PC-9 (cell line): ENCODE measurements at regions of chr1 and their contacts with region 1.

Region 1: GRCh38 chr1:114979278-114979891 is 50.2 kb upstream of the TSHB start:
- DNase-seq: peak; percentile 57 to 59
- H3K4me3 ChIP-seq: no peak overlapping the region
- H3K27ac ChIP-seq: no peak overlapping the region
- H3K4me1 ChIP-seq: no peaks in the 10 kb centered on the region
- H3K27me3 ChIP-seq: no peaks in the 10 kb centered on the region
- CTCF ChIP-seq: peak; percentile 96

Region 2: GRCh38 chr1:115052454-115053083 is 73.2 kb after region 1 on chr1:
- CTCF ChIA-PET with region 1: interaction called, 3 read pairs
- POLR2A ChIA-PET with region 1: no interaction called
- intact Hi-C with region 1: loop called (anchors 2 kb)
- DNase-seq: peak; percentile 48 to 56
- H3K4me3 ChIP-seq: no peak overlapping the region
- H3K27ac ChIP-seq: no peak overlapping the region
- H3K4me1 ChIP-seq: no peaks in the 10 kb centered on the region
- H3K27me3 ChIP-seq: no peaks in the 10 kb centered on the region
- CTCF ChIP-seq: peak; percentile 99

Region 3: GRCh38 chr1:115112496-115113375 is 133.4 kb after region 1 on chr1:
- CTCF ChIA-PET with region 1: interaction called, 3 read pairs
- POLR2A ChIA-PET with region 1: no interaction called
- intact Hi-C with region 1: loop called (anchors 1 kb)
- DNase-seq: peak in 1 of 2 experiments; percentile 56
- H3K4me3 ChIP-seq: no peak overlapping the region
- H3K27ac ChIP-seq: no peak overlapping the region
- H3K4me1 ChIP-seq: peaks cover 63% of the 10 kb centered on the region
- H3K27me3 ChIP-seq: no peaks in the 10 kb centered on the region
- CTCF ChIP-seq: peak; percentile 99

Region 4: DNA sequence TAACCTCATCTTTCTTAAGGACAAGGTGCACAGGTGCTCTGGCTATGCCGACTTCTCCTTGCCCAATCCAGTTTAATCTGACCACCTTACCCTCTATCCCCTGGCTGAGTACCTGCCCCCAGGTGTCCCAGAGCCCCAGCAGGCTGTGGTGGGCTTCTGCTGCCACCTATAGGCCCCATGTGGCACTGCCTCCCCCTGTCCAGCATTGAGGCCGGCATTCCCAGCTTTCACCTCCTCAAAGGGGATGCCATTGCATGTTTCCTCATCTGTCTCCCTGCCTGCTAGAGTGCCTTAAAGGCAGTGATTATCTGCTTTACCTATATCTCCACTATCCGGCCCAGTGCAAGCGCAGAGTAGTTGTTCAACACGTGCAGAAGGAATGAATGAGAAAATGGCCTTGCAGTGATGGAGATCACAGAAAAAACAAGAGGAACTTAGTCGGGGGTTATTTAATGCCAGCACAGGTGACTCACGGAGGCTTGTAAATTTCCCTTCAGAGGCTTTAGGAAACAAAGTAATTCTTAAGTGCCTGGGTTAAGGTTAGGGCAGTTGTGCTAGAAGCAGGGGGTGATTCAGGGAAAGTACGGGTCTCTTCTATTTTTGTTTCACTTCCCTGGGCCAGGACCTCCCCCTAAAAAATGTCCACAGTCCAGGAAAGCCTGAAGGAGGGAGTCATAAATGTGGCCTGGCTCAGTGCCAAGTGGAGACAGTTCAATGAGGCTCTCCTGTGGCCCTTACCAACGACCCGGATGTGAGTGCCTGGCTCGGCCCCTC is 490.5 kb after region 1 on chr1:
- CTCF ChIA-PET with region 1: no interaction called
- POLR2A ChIA-PET with region 1: no interaction called
- intact Hi-C with region 1: loop called (anchors 1 kb)
- DNase-seq: peak; percentile 80 to 96
- H3K4me3 ChIP-seq: peak overlapping the region; percentile 10; the same call in 1 of the 2 replicates
- H3K27ac ChIP-seq: peak overlapping the region; percentile 81
- H3K4me1 ChIP-seq: peaks cover 58% of the 10 kb centered on the region
- H3K27me3 ChIP-seq: no peaks in the 10 kb centered on the region
- CTCF ChIP-seq: peak; percentile 100

Region 5: GRCh38 chr1:115694805-115695204 is 715.4 kb after region 1 on chr1:
- CTCF ChIA-PET with region 1: no interaction called
- POLR2A ChIA-PET with region 1: no interaction called
- intact Hi-C with region 1: no loop called
- DNase-seq: no peak
- H3K4me3 ChIP-seq: no peak overlapping the region
- H3K27ac ChIP-seq: no peak overlapping the region
- H3K4me1 ChIP-seq: no peaks in the 10 kb centered on the region
- H3K27me3 ChIP-seq: no peaks in the 10 kb centered on the region
- CTCF ChIP-seq: no peak